BJ (cell line): ENCODE measurements at regions of chr20 and their contacts with region 1.

Region 1: DNA sequence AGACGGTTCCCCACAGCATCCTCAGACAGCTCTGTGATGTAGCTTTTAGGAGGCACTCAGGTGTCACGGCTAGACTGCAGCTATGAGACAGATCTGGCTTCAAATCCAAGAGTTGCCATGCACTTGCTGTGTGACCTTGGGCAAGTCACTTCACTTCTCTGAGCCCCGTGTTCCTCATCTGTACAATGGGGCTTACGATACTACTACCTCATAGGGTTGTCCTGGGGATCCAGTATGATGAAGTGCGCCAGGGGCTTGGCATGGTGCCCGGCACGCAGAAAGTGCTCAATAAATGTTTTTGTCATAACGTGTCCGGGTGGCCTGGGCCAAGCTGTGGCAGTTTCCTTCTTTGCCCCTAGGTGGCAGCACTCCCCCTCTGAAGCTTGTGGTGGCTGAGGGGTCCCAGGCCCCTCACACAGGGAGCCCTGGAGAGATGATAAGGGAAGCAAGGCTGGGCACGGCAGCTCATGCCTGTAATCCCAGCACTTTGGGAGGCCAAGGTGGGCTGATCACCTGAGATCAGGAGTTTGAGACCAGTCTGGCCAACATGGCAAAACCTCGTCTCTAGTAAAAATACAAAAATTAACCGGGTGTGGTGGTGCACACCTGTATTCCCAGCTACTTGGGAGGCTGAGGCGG is 19.1 kb upstream of the CHMP4B start:
- DNase-seq: no peak
- H3K4me3 ChIP-seq: no peak overlapping the region
- H3K27me3 ChIP-seq: no peaks in the 10 kb centered on the region
- CTCF ChIP-seq: peak; percentile 82

Region 2: GRCh38 chr20:33803921-33804337 is 11.9 kb after region 1 on chr20:
- CTCF ChIA-PET with region 1: interaction called, 11 read pairs
- POLR2A ChIA-PET with region 1: no interaction called
- DNase-seq: peak; percentile 19
- H3K4me3 ChIP-seq: no peak overlapping the region
- H3K27me3 ChIP-seq: no peaks in the 10 kb centered on the region
- CTCF ChIP-seq: no peak

Region 3: GRCh38 chr20:33810885-33811777 is 19.1 kb after region 1 on chr20 and contains the start of gene CHMP4B:
- CTCF ChIA-PET with region 1: interaction called, 11 read pairs
- POLR2A ChIA-PET with region 1: no interaction called
- DNase-seq: peak; percentile 92
- H3K4me3 ChIP-seq: peak within 1 kb of the TSS; percentile 93
- H3K27me3 ChIP-seq: no peaks in the 10 kb centered on the region
- CTCF ChIP-seq: no peak
- polyA plus RNA-seq, gene CHMP4B: 65.3 and 84.0 TPM in 2 replicates

Region 4: DNA sequence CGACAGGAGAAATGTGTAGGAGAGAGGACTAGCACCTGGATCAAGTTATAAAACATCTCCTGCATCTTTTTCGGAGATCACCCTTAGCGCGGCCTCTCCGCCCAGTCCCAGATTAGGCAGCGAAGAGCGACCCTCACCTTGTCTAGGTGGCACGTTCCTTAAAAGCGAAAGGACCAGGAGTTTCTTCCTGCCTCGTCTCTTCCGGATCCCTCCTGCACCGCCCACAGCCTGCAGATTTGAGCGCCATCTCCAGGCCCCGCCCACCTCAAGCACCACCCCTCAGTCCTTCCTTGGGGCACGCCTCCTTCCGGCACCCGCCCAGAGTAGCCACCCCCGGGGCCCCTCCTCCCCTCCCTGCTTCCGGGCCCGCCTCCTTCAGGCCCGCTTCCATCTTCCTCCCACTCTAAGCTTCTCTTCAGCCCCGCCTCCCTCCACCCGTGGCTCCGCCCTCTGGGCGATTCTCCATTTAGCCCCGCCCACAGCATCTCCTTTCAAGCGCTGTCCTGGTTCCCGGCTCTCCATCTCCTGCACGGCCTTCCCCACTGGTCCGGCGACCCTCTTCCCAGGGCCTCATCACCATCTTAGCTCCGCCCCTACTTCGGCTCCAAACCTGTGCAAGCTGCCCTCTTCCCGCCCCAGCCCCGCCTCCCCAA is 201.0 kb after region 1 on chr20:
- CTCF ChIA-PET with region 1: no interaction called
- POLR2A ChIA-PET with region 1: interaction called, 10 read pairs
- DNase-seq: peak; percentile 98
- H3K4me3 ChIP-seq: peak overlapping the region; percentile 85
- H3K27me3 ChIP-seq: no peaks in the 10 kb centered on the region
- CTCF ChIP-seq: no peak

Region 5: DNA sequence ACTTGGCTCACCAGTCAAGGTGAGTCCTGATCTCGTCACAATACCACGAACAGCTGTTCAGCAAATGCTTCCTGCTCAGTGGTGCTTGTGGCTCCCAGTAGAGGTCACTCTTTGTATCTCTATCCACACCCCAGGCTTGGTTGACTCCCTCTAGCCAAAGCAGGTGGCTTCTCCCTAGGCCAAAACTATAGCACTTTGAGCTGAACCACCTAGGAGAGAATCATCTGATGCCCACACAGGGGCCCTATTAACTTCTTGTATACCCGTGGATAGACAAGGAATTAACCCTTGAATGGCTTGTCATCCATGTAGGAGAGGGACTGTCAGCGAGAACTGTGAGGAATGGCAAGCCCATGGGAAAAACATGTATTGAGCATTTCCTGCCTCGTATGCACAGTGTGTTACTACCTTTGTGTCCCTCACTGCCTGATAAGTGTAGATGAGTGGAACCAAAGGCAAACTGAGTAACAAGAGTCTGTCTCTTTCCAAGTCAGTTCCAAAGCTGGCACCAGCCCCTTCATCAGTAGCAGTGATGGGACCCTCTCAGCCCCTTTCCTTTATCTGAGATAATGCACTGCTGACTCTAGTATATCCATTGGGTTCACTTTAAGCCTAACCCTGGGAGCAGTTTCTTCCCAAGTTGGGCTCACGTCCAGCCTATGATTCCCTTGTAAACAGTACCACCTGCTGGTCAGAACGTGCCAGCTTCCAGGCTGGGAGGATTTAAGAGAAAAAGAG is 277.4 kb after region 1 on chr20:
- CTCF ChIA-PET with region 1: interaction called, 14 read pairs
- POLR2A ChIA-PET with region 1: interaction called, 5 read pairs
- DNase-seq: no peak
- H3K4me3 ChIP-seq: no peak overlapping the region
- H3K27me3 ChIP-seq: no peaks in the 10 kb centered on the region
- CTCF ChIP-seq: peak; percentile 84